ENCODE measurements at regions of chr12 and their contacts with region 1.

Region 1: GRCh38 chr12:89542912-89543592 is 17.2 kb upstream of the POC1B start:
- DNase-seq: peak; percentile 79
- ATAC-seq: peak; percentile 92
- H3K4me3 ChIP-seq: no peak overlapping the region
- H3K4me3 Mint-ChIP-seq: no peak overlapping the region
- H3K27ac ChIP-seq: no peak overlapping the region
- H3K27ac Mint-ChIP-seq: no peak overlapping the region
- H3K4me1 ChIP-seq: peaks cover 0 to 11% of the 10 kb centered on the region in 2 donors
- H3K4me1 Mint-ChIP-seq: peaks cover 15% of the 10 kb centered on the region
- H3K27me3 ChIP-seq: no peaks in the 10 kb centered on the region
- H3K27me3 Mint-ChIP-seq: no peaks in the 10 kb centered on the region
- CTCF ChIP-seq: peak; percentile 95

Region 2: DNA sequence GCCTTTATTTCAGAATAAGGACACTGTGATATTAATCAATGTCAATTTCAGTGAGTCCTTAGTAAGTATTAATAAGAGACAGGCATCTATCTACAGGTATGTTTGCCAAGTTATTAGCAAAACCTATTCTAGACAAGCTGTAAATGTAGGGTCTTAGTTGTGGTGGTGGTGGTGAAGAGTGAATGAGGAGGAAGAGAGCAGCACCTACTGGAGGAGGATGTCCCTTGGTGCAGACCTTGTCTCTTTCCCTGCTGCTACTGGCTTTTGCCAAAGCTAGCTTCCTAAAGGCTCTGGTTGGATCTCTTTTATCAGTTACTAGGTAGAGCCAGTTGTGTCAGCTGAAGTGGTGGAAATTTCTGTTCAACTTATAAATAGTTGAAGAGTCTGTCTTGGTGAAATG is 470.4 kb after region 1 on chr12:
- CTCF ChIA-PET with region 1: interaction called, 72 read pairs
- POLR2A ChIA-PET with region 1: no interaction called
- intact Hi-C with region 1: loop called (anchors 1 kb)
- DNase-seq: peak; percentile 64
- ATAC-seq: peak; percentile 95
- H3K4me3 ChIP-seq: no peak overlapping the region
- H3K4me3 Mint-ChIP-seq: no peak overlapping the region
- H3K27ac ChIP-seq: no peak overlapping the region
- H3K27ac Mint-ChIP-seq: peak overlapping the region; percentile 33
- H3K4me1 ChIP-seq: no peaks in the 10 kb centered on the region
- H3K4me1 Mint-ChIP-seq: peaks cover 14% of the 10 kb centered on the region
- H3K27me3 ChIP-seq: no peaks in the 10 kb centered on the region
- H3K27me3 Mint-ChIP-seq: no peaks in the 10 kb centered on the region
- CTCF ChIP-seq: peak; percentile 60

Region 3: GRCh38 chr12:90102957-90103652 is 560.1 kb after region 1 on chr12:
- CTCF ChIA-PET with region 1: interaction called, 164 read pairs
- POLR2A ChIA-PET with region 1: no interaction called
- intact Hi-C with region 1: loop called (anchors 1 kb)
- DNase-seq: peak; percentile 66
- ATAC-seq: peak; percentile 70
- H3K4me3 ChIP-seq: peak overlapping the region in 1 of 5 experiments; percentile 46
- H3K4me3 Mint-ChIP-seq: peak overlapping the region; percentile 77
- H3K27ac ChIP-seq: no peak overlapping the region
- H3K27ac Mint-ChIP-seq: no peak overlapping the region
- H3K4me1 ChIP-seq: peaks cover 4 to 5% of the 10 kb centered on the region in 2 donors
- H3K4me1 Mint-ChIP-seq: peaks cover 29% of the 10 kb centered on the region
- H3K27me3 ChIP-seq: no peaks in the 10 kb centered on the region
- H3K27me3 Mint-ChIP-seq: no peaks in the 10 kb centered on the region
- CTCF ChIP-seq: peak; percentile 75

Region 4: GRCh38 chr12:90253674-90254181 is 710.7 kb after region 1 on chr12:
- CTCF ChIA-PET with region 1: interaction called, 27 read pairs
- POLR2A ChIA-PET with region 1: no interaction called
- intact Hi-C with region 1: loop called (anchors 1 kb)
- DNase-seq: peak; percentile 88
- ATAC-seq: peak; percentile 92
- H3K4me3 ChIP-seq: peak overlapping the region in 1 of 5 experiments; percentile 3
- H3K4me3 Mint-ChIP-seq: peak overlapping the region; percentile 86
- H3K27ac ChIP-seq: peak overlapping the region; percentile 60 to 64
- H3K27ac Mint-ChIP-seq: peak overlapping the region; percentile 97
- H3K4me1 ChIP-seq: peaks cover 22 to 27% of the 10 kb centered on the region in 2 donors
- H3K4me1 Mint-ChIP-seq: peaks cover 24% of the 10 kb centered on the region
- H3K27me3 ChIP-seq: no peaks in the 10 kb centered on the region
- H3K27me3 Mint-ChIP-seq: no peaks in the 10 kb centered on the region
- CTCF ChIP-seq: peak; percentile 66

Region 5: DNA sequence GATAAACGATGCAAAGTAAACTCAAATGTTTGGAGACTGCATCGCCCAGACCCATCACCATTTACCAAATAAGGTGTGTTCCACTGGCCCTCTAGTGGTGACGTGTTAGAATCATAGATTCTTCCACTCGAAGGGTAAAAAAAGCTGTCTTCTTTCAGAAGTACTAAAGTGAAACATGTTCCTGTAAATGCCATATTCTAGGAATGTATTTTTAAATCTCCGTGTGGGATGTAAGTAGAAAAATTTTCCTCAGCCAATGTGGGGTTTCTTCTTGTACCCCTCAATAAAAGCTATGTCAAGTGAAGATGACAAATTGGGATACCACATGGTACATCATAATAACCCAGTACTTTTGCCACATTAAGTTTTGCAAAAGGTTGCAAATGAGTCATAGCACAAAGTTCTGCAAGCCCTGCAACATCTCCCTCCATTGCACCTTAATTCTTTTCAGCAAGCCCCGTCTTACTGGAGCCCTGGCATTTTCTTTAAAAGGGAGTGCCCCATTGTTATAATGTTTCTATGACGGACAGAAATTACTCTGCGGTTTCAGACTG is 1311.2 kb after region 1 on chr12:
- CTCF ChIA-PET with region 1: interaction called, 21 read pairs
- POLR2A ChIA-PET with region 1: no interaction called
- intact Hi-C with region 1: no loop called
- DNase-seq: peak; percentile 31
- ATAC-seq: no peak
- H3K4me3 ChIP-seq: no peak overlapping the region
- H3K4me3 Mint-ChIP-seq: no peak overlapping the region
- H3K27ac ChIP-seq: no peak overlapping the region
- H3K27ac Mint-ChIP-seq: no peak overlapping the region
- H3K4me1 ChIP-seq: no peaks in the 10 kb centered on the region
- H3K4me1 Mint-ChIP-seq: peaks cover 2% of the 10 kb centered on the region
- H3K27me3 ChIP-seq: no peaks in the 10 kb centered on the region
- H3K27me3 Mint-ChIP-seq: no peaks in the 10 kb centered on the region
- CTCF ChIP-seq: peak; percentile 81

Measured in B cell (primary cell).